ENCODE measurements at regions of chr17 and their contacts with region 1.

Region 1: DNA sequence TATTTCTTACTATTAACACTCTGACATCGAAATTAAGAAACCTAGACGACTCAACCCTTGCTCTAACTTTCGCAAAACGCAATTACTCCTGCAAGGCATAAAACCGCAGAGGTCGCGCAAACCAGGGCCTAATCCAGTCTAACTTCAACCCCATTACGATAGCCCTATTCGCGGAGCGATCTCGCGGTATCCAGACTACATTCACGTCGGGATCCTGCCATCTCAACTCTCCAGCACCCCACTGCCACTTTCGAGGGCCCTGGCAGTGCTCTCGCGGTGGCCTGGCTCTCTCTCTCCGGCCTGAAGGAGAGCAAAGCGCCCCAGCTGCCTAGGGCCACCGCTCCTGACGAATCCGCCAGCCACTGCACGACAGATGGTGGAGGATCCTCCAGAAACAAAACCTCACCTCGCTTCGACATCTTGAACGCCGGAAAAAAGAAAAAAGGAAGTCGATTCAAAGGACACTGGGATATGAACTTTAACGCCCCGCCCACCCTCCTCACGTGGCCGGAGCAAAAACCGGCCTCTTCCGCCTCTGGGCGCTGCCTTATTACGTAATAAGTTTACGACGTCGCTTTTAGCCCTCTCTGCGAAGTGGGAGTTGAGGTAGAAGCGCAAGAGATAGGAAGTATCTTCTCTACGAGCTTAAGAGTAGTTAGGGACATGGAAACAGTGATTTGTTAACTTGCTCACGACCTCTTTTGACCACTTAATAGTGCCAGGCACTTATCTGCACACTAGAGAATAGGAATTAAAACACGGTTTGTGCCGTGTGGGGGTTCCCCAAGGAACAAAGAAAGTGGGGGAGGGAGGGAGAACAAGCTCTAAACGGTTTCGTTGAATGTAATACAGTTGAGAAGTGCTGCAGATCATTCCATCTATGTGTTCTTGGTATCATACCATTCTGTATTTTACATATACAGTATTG is at the start of gene RPL23:
- DNase-seq: peak; percentile 95
- H3K4me3 ChIP-seq: peak within 1 kb of the TSS; percentile 72
- H3K27ac ChIP-seq: peak within 1 kb of the TSS; percentile 94
- H3K4me1 ChIP-seq: peaks cover 7% of the 10 kb centered on the region
- H3K27me3 ChIP-seq: no peaks in the 10 kb centered on the region
- CTCF ChIP-seq: no peak
- total RNA-seq, gene RPL23: 845 to 956 TPM

Region 2: GRCh38 chr17:38824899-38825761 is 28.4 kb before region 1 on chr17 and contains the start of gene CWC25:
- intact Hi-C with region 1: loop called (anchors 2 kb)
- DNase-seq: peak; percentile 97
- H3K4me3 ChIP-seq: peak within 1 kb of the TSS; percentile 88
- H3K27ac ChIP-seq: peak within 1 kb of the TSS; percentile 85
- H3K4me1 ChIP-seq: peaks cover 6% of the 10 kb centered on the region
- H3K27me3 ChIP-seq: no peaks in the 10 kb centered on the region
- CTCF ChIP-seq: no peak
- total RNA-seq, gene CWC25: 18.7 TPM